Testis (tissue), 5 donors: ENCODE measurements at regions of chr17 and their contacts with region 1.

Region 1: DNA sequence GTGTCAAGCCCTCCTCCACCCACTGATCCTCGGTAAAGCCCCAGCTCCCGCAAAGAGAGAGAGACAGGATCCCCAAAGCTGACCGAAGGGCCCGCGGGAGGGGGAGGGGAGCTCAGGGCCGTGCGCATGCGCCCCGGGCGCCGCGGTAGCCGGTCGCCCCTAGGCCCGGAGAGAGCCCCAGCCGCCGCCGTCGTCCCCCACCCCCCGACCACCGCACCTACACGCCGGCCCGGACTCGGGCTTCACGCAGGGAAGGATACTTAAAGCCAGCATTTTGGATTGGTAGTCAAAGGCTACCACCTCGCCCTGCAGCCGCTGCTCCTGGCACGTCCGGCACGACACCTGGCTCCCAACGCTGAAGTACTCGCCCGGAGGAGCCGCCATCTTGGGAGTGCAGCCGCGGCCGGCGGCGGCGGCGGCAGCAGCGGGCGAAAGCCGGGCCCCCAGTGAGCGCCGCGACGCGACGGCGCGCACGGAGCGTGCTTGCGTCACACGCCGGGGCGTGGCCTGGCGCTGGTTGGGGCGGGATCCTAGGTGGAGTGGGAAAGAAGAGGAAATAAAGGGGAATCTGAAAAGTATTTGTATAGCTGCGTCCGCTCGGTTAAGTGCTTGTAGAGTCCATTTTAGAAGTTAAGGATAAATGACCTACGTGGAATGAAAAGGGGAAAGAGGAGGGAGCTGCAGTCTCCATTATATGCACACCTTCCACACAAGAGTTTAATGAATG is at the start of gene LSM12:
- DNase-seq: peak; percentile 88
- H3K4me3 ChIP-seq: peak within 1 kb of the TSS; percentile 84 to 88
- H3K27ac ChIP-seq: peak within 1 kb of the TSS; percentile 96 to 97
- H3K4me1 ChIP-seq: peaks cover 22% of the 10 kb centered on the region
- H3K27me3 ChIP-seq: no peaks in the 10 kb centered on the region
- CTCF ChIP-seq: no peak
- POLR2A ChIP-seq: peak; percentile 13
- total RNA-seq, gene LSM12: 52.7 to 74.4 TPM

Region 2: GRCh38 chr17:43983515-43984411 is 82.6 kb before region 1 on chr17:
- intact Hi-C with region 1: no loop called
- DNase-seq: peak; percentile 52
- H3K4me3 ChIP-seq: peak overlapping the region; percentile 43 to 48
- H3K27ac ChIP-seq: no peak overlapping the region
- H3K4me1 ChIP-seq: no peaks in the 10 kb centered on the region
- H3K27me3 ChIP-seq: no peaks in the 10 kb centered on the region
- CTCF ChIP-seq: peak in 1 of 3 experiments; percentile 13
- POLR2A ChIP-seq: no peak

Region 3: DNA sequence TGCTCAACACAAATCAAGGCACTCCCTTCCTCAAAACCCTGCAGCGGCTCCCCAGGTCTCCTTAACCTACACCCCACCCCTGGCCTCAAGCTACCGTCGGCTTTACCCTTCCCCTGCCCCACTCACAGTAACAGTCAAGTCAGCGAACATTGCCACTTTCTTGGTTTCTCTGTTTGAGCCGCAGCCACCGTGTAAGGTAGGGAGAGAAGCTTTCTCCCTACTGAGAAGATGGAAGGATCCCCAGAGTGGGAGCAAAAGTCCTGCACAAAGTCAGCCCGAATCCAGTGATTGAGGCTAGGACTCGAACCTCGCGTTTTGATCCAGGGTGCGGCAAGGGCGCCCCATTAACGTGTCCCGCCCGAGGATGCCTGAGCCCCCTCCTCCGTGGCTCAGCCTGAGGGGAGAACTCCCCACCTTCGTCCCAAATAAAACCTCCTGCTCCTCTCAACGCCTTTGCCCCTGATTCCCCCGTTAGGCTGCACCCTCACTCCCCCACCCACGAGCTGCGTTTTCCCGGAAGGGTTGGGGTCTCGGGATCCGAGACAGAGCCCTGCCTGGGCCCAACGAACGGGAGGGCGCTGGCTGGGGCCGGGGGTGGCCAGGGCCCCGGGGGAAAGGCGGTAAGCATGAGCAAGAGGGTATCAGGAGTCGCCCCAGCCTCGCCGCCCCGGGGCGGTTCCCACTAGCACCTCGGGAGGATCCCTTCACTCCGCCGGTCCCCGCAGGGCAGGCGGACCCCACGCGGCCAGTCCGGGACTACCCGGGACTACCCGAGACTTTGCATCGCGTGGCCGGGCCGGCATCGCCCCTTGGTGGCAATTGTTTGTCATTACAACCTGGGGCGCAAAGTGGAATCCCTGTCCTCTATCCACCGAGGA is 71.9 kb before region 1 on chr17:
- intact Hi-C with region 1: no loop called
- DNase-seq: peak; percentile 78
- H3K4me3 ChIP-seq: peak overlapping the region; percentile 36 to 57
- H3K27ac ChIP-seq: peak overlapping the region in 1 of 2 donors; percentile 50
- H3K4me1 ChIP-seq: peaks cover 11% of the 10 kb centered on the region
- H3K27me3 ChIP-seq: no peaks in the 10 kb centered on the region
- CTCF ChIP-seq: peak; percentile 75 to 93 (median 84)
- POLR2A ChIP-seq: no peak

Region 4: GRCh38 chr17:44110823-44111633 is 44.7 kb after region 1 on chr17:
- intact Hi-C with region 1: loop called (anchors 10 kb)
- DNase-seq: peak; percentile 98
- H3K4me3 ChIP-seq: peak overlapping the region; percentile 31 to 49
- H3K27ac ChIP-seq: peak overlapping the region; percentile 75 to 91
- H3K4me1 ChIP-seq: peaks cover 93% of the 10 kb centered on the region
- H3K27me3 ChIP-seq: no peaks in the 10 kb centered on the region
- CTCF ChIP-seq: peak in 1 of 3 experiments; percentile 23
- POLR2A ChIP-seq: peak; percentile 51

Region 5: GRCh38 chr17:44132275-44132821 is 66.0 kb after region 1 on chr17:
- intact Hi-C with region 1: no loop called
- DNase-seq: no peak
- H3K4me3 ChIP-seq: no peak overlapping the region
- H3K27ac ChIP-seq: no peak overlapping the region
- H3K4me1 ChIP-seq: no peaks in the 10 kb centered on the region
- H3K27me3 ChIP-seq: no peaks in the 10 kb centered on the region
- CTCF ChIP-seq: no peak
- POLR2A ChIP-seq: no peak